Left ventricle myocardium inferior (tissue), 1 donor: ENCODE measurements at regions of chr18 and their contacts with region 1.

Region 1: DNA sequence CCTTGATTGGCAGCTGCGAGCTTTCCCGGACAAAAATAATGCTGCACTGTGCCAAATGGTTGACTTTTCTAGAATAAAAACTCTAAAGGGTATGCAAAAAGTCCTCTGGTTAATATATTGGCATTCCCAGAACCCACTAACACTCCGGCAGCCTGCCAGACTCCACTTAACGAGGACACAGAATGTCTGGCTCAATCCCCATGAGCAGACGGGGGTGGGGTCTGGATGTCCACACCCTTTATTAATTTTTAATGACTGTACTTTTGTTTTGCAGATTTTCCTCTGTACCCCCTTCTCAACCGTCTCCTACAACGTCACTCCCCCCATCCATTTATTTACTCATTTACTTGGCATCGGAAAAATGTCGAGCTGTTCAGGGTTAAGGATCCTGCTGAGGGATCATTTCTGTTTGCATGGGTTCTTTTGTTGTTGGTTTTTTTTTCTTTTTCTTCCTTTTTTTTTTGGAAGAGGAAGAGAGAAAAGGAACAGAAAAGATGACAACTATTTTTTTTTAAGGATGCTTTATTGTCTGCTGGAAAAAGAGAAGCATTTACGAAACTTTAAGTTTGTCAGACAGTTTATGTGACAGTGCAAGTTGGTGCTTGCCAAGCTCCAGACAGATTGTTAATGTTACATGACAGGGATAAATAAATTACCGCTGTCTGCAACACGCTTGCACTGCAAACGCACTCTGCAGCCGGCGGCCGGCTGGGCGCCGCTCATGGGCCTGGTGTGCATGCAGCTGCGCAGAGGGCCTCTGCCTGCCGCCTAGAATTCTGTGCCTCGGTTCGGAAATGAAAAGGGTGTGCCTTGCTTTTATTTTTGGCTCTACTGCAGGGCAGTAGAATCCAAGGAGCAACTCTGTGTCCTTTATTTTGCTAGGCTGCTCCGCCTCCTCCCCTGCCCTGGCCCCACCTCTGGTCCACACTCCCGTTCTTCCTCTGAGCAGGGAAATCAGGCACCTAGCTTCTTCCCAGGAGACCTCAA is 3.6 kb downstream of the LDLRAD4 start:
- DNase-seq: peak; percentile 84
- H3K4me3 ChIP-seq: peak overlapping the region; percentile 74
- H3K27ac ChIP-seq: peak overlapping the region; percentile 92
- H3K4me1 ChIP-seq: peaks cover 77% of the 10 kb centered on the region
- H3K27me3 ChIP-seq: no peaks in the 10 kb centered on the region
- CTCF ChIP-seq: no peak

Region 2: DNA sequence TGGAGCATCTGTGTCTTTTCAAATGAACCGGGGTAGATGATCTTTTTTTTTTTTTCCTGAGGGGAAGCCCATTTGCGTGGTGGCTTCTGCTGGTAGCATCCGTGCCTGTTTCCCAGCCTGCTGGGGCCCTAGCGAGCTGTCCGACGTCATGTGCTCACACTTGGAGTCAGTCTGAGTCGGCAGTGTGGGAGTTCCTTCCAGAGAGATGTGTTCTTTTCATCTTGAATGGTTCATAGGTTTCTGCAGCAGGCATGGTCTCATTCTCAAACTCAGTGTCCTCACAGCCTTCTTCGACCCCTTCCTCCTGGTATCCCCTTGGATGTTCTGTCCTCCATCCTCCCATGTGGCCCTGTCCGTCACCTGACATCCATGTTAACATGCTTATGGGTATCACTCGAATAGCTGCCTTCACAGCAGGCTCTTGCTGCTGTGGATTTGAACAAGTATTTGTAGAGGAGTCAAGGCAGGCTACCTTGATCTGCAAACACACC is 47.4 kb after region 1 on chr18:
- intact Hi-C with region 1: loop called (anchors 10 kb)
- DNase-seq: peak; percentile 40
- H3K4me3 ChIP-seq: no peak overlapping the region
- H3K27ac ChIP-seq: peak overlapping the region; percentile 81
- H3K4me1 ChIP-seq: peaks cover 100% of the 10 kb centered on the region
- H3K27me3 ChIP-seq: no peaks in the 10 kb centered on the region
- CTCF ChIP-seq: no peak

Region 3: GRCh38 chr18:13381944-13382365 is 159.8 kb after region 1 on chr18:
- intact Hi-C with region 1: loop called (anchors 5 kb)
- DNase-seq: peak; percentile 70
- H3K4me3 ChIP-seq: peak overlapping the region; percentile 55
- H3K27ac ChIP-seq: peak overlapping the region; percentile 87
- H3K4me1 ChIP-seq: peaks cover 71% of the 10 kb centered on the region
- H3K27me3 ChIP-seq: no peaks in the 10 kb centered on the region
- CTCF ChIP-seq: no peak